ENCODE measurements at regions of chr3 and their contacts with region 1.

Region 1: GRCh38 chr3:4776980-4777581 is 202.2 kb upstream of the BHLHE40 start:
- DNase-seq: peak; percentile 28
- ATAC-seq: peak; percentile 82
- H3K4me3 Mint-ChIP-seq: no peak overlapping the region
- H3K27ac Mint-ChIP-seq: peak overlapping the region; percentile 93
- H3K4me1 Mint-ChIP-seq: peaks cover 49% of the 10 kb centered on the region
- H3K27me3 Mint-ChIP-seq: no peaks in the 10 kb centered on the region
- CTCF ChIP-seq: no peak

Region 2: GRCh38 chr3:4741404-4742307 is 35.4 kb before region 1 on chr3:
- CTCF ChIA-PET with region 1: no interaction called
- POLR2A ChIA-PET with region 1: interaction called, 4 read pairs
- intact Hi-C with region 1: loop called (anchors 2 kb)
- DNase-seq: peak; percentile 24
- ATAC-seq: peak; percentile 2
- H3K4me3 Mint-ChIP-seq: no peak overlapping the region
- H3K27ac Mint-ChIP-seq: peak overlapping the region; percentile 91
- H3K4me1 Mint-ChIP-seq: peaks cover 54% of the 10 kb centered on the region
- H3K27me3 Mint-ChIP-seq: no peaks in the 10 kb centered on the region
- CTCF ChIP-seq: no peak